Heart left ventricle (tissue), 16 donors: ENCODE measurements at regions of chr13 and their contacts with region 1.

Region 1: DNA sequence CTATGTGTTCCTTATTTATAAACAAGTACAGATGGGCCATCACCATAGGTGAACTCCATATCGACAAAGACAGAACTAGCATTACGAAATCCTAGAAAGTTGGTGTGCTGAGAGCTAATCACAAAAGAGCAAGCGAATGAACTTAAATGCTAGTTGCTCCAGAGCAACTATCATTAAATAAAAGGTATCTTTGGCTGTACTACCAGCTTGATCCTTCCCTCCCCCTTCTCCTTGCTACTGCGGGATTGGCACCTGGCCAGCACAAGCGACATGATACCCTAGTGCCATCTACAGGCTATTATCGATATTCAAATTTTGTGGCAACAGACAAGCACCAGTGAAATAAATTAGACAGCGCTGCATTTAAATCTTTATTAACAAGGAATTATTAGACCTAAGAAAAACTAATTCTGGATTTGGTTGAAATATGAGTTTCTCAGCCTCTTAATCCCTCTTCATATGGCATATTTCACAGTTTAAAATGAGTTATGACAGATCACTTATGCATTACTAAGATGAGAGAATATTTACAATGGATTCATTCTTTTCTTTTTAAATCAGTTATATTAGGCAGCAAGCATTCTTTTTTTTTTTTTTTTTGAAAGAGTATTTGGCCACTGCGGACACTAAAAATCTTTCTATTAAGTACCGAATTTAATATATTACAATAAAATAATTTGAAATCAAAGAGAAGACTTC is 5.8 kb downstream of the PCDH9 start:
- DNase-seq: peak; percentile 74 to 84 (median 77)
- ATAC-seq: peak; percentile 77 to 88 (median 87)
- H3K4me3 ChIP-seq: peak overlapping the region in 10 of 12 donors; percentile 7 to 80 (median 44)
- H3K27ac ChIP-seq: peak overlapping the region in 5 of 12 donors; percentile 25 to 52 (median 42)
- H3K4me1 ChIP-seq: peaks cover 0 to 49% (median 8%) of the 10 kb centered on the region in 12 donors
- H3K27me3 ChIP-seq: peaks cover 0 to 9% (median 0%) of the 10 kb centered on the region in 9 donors
- CTCF ChIP-seq: peak; percentile 51 to 88 (median 71)
- POLR2A ChIP-seq: no peak

Region 2: DNA sequence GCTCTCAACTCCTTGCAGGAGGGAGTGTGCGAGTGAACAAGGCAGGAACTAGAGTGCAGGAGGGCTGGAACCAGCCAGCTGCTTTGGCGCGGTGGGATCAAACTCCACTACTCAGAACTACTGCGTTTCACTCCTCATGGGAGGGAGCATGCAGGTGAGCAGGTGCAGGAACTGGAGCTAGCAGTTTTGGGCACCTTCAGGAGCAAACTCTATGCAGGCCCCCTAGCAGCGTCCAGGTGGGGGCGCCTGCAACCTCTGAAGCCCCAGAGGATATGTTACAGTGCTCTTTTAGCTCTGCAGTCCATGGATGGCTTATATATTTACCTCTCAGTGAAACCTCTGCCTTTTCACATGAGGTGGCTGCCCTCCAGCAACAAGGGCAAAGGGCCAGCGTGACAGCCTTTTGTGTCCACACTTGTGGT is 1297.5 kb before region 1 on chr13:
- intact Hi-C with region 1: loop called in 2 of 10 experiments (anchors 10 kb)
- DNase-seq: peak in 4 of 5 donors; percentile 13 to 62 (median 41)
- ATAC-seq: peak; percentile 71 to 91 (median 87)
- H3K4me3 ChIP-seq: no peak overlapping the region
- H3K27ac ChIP-seq: no peak overlapping the region
- H3K4me1 ChIP-seq: no peaks in the 10 kb centered on the region
- H3K27me3 ChIP-seq: no peaks in the 10 kb centered on the region
- CTCF ChIP-seq: peak in 11 of 12 donors; percentile 18 to 57 (median 47)
- POLR2A ChIP-seq: no peak

Region 3: GRCh38 chr13:66618702-66619101 is 605.6 kb before region 1 on chr13:
- intact Hi-C with region 1: loop called in 3 of 10 experiments (anchors 5 to 10 kb)
- DNase-seq: no peak
- ATAC-seq: peak in 1 of 4 donors; percentile 46
- H3K4me3 ChIP-seq: no peak overlapping the region
- H3K27ac ChIP-seq: no peak overlapping the region
- H3K4me1 ChIP-seq: peaks cover 0 to 6% (median 0%) of the 10 kb centered on the region in 12 donors
- H3K27me3 ChIP-seq: no peaks in the 10 kb centered on the region
- CTCF ChIP-seq: peak in 10 of 12 donors; percentile 18 to 47 (median 32)
- POLR2A ChIP-seq: no peak

Region 4: GRCh38 chr13:66689628-66690027 is 534.7 kb before region 1 on chr13:
- intact Hi-C with region 1: loop called in 7 of 10 experiments (anchors 5 to 10 kb)
- DNase-seq: no peak
- ATAC-seq: peak in 1 of 4 donors; percentile 59
- H3K4me3 ChIP-seq: no peak overlapping the region
- H3K27ac ChIP-seq: no peak overlapping the region
- H3K4me1 ChIP-seq: peaks cover 0 to 7% (median 0%) of the 10 kb centered on the region in 12 donors
- H3K27me3 ChIP-seq: no peaks in the 10 kb centered on the region
- CTCF ChIP-seq: peak in 6 of 12 donors; percentile 33 to 55 (median 38)
- POLR2A ChIP-seq: no peak

Region 5: DNA sequence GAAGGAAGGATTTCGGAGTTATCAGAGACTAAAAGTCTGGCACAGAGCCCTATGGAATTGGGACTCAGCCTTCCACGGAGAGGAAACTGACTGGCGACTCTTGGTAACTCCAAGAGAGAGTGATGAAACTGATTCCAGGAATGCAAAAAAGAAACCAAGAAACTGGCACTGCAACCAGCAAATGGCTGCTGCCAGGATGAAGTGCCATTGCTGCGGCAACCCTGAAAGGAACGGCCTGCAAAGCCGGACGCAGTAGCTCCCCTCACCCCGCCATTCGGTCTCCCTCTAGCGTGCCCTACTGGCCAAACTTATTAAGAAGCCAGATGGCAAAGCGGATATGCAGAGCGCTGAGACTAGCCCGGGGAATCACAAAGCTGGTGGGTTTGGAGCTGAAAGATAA is 230.2 kb before region 1 on chr13:
- intact Hi-C with region 1: loop called in 2 of 10 experiments (anchors 5 to 10 kb)
- DNase-seq: peak; percentile 63 to 76 (median 68)
- ATAC-seq: peak; percentile 90 to 98 (median 96)
- H3K4me3 ChIP-seq: peak overlapping the region in 11 of 12 donors; percentile 7 to 58 (median 43)
- H3K27ac ChIP-seq: peak overlapping the region in 1 of 12 donors; percentile 42
- H3K4me1 ChIP-seq: peaks cover 0 to 7% (median 0%) of the 10 kb centered on the region in 12 donors
- H3K27me3 ChIP-seq: no peaks in the 10 kb centered on the region
- CTCF ChIP-seq: peak; percentile 20 to 70 (median 60)
- POLR2A ChIP-seq: no peak

Region 6: GRCh38 chr13:67100723-67101122 is 123.6 kb before region 1 on chr13:
- intact Hi-C with region 1: no loop called
- DNase-seq: no peak
- ATAC-seq: no peak
- H3K4me3 ChIP-seq: no peak overlapping the region
- H3K27ac ChIP-seq: no peak overlapping the region
- H3K4me1 ChIP-seq: peaks cover 0 to 16% (median 0%) of the 10 kb centered on the region in 12 donors
- H3K27me3 ChIP-seq: no peaks in the 10 kb centered on the region
- CTCF ChIP-seq: no peak
- POLR2A ChIP-seq: no peak

Region 7: GRCh38 chr13:67147342-67148133 is 76.8 kb before region 1 on chr13:
- intact Hi-C with region 1: loop called in 2 of 10 experiments (anchors 5 kb)
- DNase-seq: peak in 1 of 5 donors; percentile 31
- ATAC-seq: peak; percentile 85 to 94 (median 90)
- H3K4me3 ChIP-seq: peak overlapping the region in 8 of 12 donors; percentile 2 to 40 (median 22)
- H3K27ac ChIP-seq: peak overlapping the region; percentile 27 to 91 (median 80)
- H3K4me1 ChIP-seq: peaks cover 0 to 49% (median 26%) of the 10 kb centered on the region in 12 donors
- H3K27me3 ChIP-seq: no peaks in the 10 kb centered on the region
- CTCF ChIP-seq: no peak
- POLR2A ChIP-seq: no peak